Aorta (tissue), 5 donors: ENCODE measurements at regions of chr11 and their contacts with region 1.

Region 1: DNA sequence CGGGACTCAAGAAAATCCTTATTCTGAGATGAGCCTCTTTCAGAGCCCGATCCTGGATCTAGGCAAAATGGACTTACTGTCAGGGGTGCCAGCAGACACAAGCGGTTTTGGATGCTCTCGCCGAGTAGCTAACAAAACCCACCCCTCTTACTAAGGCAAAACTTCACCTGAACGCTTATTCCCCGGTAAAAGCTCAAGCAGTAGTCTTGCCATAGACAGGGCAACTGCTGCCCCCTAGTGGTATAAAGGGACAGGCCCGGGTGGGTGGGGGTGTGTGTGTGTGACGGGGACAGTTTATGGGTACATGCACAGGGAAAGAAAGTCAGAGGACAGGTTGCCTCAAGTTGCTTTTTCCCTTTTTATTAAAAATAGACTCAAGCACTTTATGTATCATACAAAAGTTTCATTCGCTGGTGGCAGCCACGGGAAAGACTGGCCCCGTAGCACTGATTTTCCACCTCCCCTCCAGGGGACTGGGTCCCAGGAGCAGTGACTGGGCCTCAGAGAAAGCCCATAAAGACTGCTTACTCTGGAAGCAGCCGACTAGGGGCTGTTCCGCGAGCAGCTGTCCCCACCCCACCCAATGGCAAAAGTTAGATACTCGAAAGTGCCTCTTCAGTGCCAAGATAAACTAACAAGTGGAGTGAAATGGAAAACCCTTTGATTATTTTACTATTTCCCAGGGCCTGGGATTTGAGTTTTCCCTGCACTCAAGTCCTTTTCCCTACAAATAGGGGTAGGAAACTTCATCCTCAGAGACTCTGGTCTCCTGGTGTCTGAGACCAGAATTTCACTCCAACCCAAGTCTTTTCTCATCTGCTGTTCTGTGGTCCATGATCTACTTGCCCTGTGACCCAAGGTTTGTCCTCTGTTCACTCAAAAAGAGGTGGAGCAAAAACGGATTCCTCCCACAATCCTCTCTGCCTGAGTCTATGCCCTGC is 4.7 kb downstream of the YPEL4 start:
- DNase-seq: peak; percentile 84 to 90
- ATAC-seq: peak; percentile 82
- H3K4me3 ChIP-seq: no peak overlapping the region
- H3K27ac ChIP-seq: no peak overlapping the region
- H3K4me1 ChIP-seq: no peaks in the 10 kb centered on the region
- H3K27me3 ChIP-seq: no peaks in the 10 kb centered on the region

Region 2: GRCh38 chr11:57567515-57568329 is 77.3 kb before region 1 on chr11 and contains the start of gene UBE2L6:
- intact Hi-C with region 1: loop called (anchors 2 kb)
- DNase-seq: peak; percentile 89 to 97
- ATAC-seq: peak; percentile 86
- H3K4me3 ChIP-seq: peak within 1 kb of the TSS; percentile 79 to 85
- H3K27ac ChIP-seq: peak within 1 kb of the TSS in 1 of 2 donors; percentile 74
- H3K4me1 ChIP-seq: no peaks in the 10 kb centered on the region
- H3K27me3 ChIP-seq: no peaks in the 10 kb centered on the region
- total RNA-seq, gene UBE2L6: 42.0 to 68.9 TPM